ENCODE measurements at regions of chr20 and their contacts with region 1.

Region 1: DNA sequence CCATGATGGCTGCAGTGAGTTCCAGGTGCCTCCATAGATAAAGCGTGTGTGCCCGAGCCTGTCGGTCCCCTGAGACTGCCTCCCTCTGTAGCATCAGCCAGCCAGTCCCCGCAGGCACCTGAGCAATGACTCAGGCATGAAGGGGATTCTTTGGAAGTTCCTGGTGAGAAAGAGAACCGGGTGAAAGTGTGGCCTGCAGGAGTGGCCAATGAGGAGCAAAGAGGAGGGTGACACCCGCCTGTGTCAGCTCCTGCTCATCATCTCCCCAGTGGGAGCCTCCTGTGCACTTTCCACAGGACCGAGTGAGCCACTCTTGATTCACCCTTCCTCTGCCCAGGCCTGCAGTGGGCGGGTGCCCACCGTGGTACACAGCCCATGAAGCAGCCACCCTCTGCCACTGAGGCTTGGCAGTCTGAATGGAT is 71.2 kb upstream of the PTPN1 start:
- DNase-seq: no peak
- H3K4me3 ChIP-seq: no peak overlapping the region
- H3K27ac ChIP-seq: no peak overlapping the region
- H3K4me1 ChIP-seq: no peaks in the 10 kb centered on the region
- H3K27me3 ChIP-seq: no peaks in the 10 kb centered on the region
- CTCF ChIP-seq: no peak

Region 2: GRCh38 chr20:50179507-50180016 is 259.4 kb before region 1 on chr20:
- CTCF ChIA-PET with region 1: interaction called, 13 read pairs
- POLR2A ChIA-PET with region 1: no interaction called
- intact Hi-C with region 1: no loop called
- DNase-seq: no peak
- H3K4me3 ChIP-seq: no peak overlapping the region
- H3K27ac ChIP-seq: no peak overlapping the region
- H3K4me1 ChIP-seq: peaks cover 6% of the 10 kb centered on the region
- H3K27me3 ChIP-seq: no peaks in the 10 kb centered on the region
- CTCF ChIP-seq: no peak; the same call in 1 of the 2 replicates

Region 3: GRCh38 chr20:50302341-50303041 is 136.5 kb before region 1 on chr20:
- CTCF ChIA-PET with region 1: no interaction called
- POLR2A ChIA-PET with region 1: interaction called, 10 read pairs
- intact Hi-C with region 1: no loop called
- DNase-seq: no peak
- H3K4me3 ChIP-seq: no peak overlapping the region
- H3K27ac ChIP-seq: no peak overlapping the region
- H3K4me1 ChIP-seq: peaks cover 16% of the 10 kb centered on the region
- H3K27me3 ChIP-seq: no peaks in the 10 kb centered on the region
- CTCF ChIP-seq: no peak

Measured in A673 (cell line).